OCI-LY7 (cell line): ENCODE measurements at regions of chr2 and their contacts with region 1.

Region 1: GRCh38 chr2:182715896-182716668 is at the start of gene DNAJC10:
- DNase-seq: peak; percentile 85
- H3K4me3 ChIP-seq: peak within 1 kb of the TSS; percentile 87
- H3K27ac ChIP-seq: peak within 1 kb of the TSS; percentile 95
- H3K4me1 ChIP-seq: peaks cover 42% of the 10 kb centered on the region
- CTCF ChIP-seq: no peak
- total RNA-seq, gene DNAJC10: 117 and 151 TPM in 2 replicates

Region 2: DNA sequence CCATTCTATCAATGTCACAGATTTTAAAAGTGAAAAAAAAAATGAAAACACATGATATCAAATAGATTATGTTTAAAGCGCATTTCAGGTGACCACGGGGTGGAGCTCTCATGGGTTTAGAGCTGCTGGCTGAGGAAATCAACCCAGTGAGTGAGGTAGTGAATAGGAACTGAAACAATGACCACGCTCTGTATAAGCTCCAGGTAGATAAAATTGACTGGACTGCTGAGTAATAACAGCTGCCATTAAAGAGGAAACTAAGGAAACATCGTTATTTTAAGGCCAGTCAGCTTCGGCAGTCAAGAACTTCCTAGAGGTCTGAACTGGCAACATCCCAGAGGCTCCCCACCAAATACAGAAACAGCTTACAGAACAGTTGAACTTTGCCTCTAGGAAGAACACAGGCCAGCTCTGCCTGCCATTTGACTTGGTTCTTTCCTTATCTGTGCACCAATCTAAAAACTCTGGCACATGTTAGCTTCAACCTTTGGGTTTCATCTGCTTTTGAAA is 475.2 kb before region 1 on chr2:
- CTCF ChIA-PET with region 1: no interaction called
- POLR2A ChIA-PET with region 1: no interaction called
- intact Hi-C with region 1: no loop called
- DNase-seq: peak; percentile 54
- H3K4me3 ChIP-seq: no peak overlapping the region
- H3K27ac ChIP-seq: no peak overlapping the region
- H3K4me1 ChIP-seq: no peaks in the 10 kb centered on the region
- CTCF ChIP-seq: peak; percentile 89

Region 3: DNA sequence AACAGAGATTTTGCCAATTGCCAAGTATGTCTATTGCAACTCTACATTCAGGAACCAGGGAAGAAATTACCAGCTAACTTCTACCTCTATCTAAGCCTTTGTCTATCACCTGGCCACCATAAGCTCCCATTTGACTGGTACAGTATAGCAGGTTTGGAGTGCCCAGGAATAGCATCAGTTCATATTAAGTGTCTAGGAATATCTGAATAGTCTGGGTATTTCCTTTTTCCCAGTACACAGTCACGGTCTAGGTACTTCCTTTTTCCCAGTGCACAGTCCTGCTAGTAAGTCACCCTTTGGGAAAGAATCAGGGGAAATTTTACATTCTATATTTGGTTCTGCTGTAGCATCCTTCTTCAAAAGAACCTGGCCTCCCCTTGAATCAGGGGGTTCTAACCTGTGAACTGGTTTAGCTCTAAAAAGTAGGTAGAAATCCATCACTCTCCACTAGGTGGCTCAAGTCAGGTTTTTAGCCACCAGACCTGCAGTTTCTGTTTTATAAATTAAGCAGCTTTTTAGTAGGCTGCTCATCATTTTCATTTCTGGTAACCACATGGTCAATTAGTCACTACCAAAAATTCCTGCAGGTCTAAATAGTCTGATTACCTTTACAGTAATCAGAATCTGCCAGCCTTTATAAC is 49.3 kb before region 1 on chr2:
- CTCF ChIA-PET with region 1: no interaction called
- POLR2A ChIA-PET with region 1: interaction called, 7 read pairs
- intact Hi-C with region 1: loop called (anchors 5 kb)
- DNase-seq: peak; percentile 52
- H3K4me3 ChIP-seq: no peak overlapping the region
- H3K27ac ChIP-seq: no peak overlapping the region
- H3K4me1 ChIP-seq: no peaks in the 10 kb centered on the region
- CTCF ChIP-seq: peak; percentile 86

Region 4: DNA sequence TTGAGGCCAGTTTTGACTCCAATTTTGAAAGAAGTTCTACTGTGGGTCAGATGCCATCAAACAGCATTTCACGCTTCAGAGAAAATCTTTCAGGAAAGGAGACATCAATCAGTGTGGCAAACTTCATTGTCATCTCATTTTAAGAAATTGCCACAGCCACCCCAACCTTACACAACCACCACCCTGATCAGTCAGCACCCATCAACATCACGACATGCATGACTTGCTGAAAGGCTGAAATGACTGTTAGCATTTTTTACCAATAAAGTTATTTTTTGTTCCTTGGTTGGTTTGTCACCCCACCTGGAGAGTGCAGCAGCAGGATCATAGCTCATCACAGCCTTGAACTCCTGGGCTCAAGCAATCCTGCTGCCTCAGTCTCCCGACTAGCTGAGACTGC is 10.4 kb after region 1 on chr2:
- CTCF ChIA-PET with region 1: no interaction called
- POLR2A ChIA-PET with region 1: interaction called, 68 read pairs
- intact Hi-C with region 1: no loop called
- DNase-seq: no peak
- H3K4me3 ChIP-seq: no peak overlapping the region
- H3K27ac ChIP-seq: no peak overlapping the region
- H3K4me1 ChIP-seq: peaks cover 15% of the 10 kb centered on the region
- CTCF ChIP-seq: no peak

Region 5: DNA sequence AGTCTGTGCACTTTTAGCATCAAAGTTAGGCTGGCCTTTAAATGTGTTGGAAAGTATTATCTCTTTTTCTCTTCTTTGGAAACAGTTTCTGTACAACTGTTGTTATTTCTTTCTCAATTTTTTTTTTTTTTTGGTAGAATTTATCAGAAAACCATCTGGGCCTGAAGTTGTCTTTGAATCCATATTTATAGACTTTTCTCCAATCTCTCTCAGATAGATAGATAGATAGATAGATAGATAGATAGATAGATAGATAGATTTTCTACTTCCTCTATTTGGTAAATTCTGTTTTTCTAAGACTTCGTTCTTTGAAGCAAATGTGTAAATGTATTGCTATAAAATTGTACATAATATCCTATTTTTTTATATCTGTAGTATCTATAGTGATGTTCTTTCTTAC is 17.5 kb after region 1 on chr2:
- CTCF ChIA-PET with region 1: no interaction called
- POLR2A ChIA-PET with region 1: interaction called, 68 read pairs
- intact Hi-C with region 1: no loop called
- DNase-seq: no peak
- H3K4me3 ChIP-seq: no peak overlapping the region
- H3K27ac ChIP-seq: no peak overlapping the region
- H3K4me1 ChIP-seq: no peaks in the 10 kb centered on the region
- CTCF ChIP-seq: no peak

Region 6: DNA sequence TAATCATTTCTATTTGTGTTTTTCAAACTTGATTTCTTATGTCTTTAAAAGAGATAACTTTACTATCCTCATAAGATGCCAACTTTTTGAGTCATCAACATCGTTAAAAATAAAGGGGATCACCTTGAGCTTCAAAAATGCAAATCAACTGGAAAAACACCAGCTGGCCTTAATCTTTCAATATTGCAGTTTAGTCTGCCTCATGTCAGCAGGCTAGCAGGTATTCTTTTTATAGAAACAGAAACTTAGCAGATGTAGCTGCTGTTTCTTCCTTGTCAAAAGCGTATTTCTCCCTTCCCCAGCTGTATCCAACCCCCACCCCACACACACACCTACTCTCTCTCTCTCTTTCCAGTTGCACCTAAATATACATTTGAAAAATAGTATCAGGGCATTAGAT is 1728.1 kb after region 1 on chr2:
- CTCF ChIA-PET with region 1: no interaction called
- POLR2A ChIA-PET with region 1: no interaction called
- intact Hi-C with region 1: loop called (anchors 5 kb)
- DNase-seq: peak; percentile 94
- H3K4me3 ChIP-seq: peak overlapping the region; percentile 31
- H3K27ac ChIP-seq: peak overlapping the region; percentile 97
- H3K4me1 ChIP-seq: peaks cover 43% of the 10 kb centered on the region
- CTCF ChIP-seq: no peak